Activated T-helper 2 cell treated with anti-CD3 and anti-CD28 coated beads, Interferon-gamma antibody, Interleukin-2, Interleukin-4, amounts not matched to agents 10 μg/mL and 5 μg/mL and 100 μg/mL, durations not matched to agents 14 hours and 24 hours and 36 hours (primary cell): ENCODE measurements at regions of chr16 and their contacts with region 1.

Region 1: DNA sequence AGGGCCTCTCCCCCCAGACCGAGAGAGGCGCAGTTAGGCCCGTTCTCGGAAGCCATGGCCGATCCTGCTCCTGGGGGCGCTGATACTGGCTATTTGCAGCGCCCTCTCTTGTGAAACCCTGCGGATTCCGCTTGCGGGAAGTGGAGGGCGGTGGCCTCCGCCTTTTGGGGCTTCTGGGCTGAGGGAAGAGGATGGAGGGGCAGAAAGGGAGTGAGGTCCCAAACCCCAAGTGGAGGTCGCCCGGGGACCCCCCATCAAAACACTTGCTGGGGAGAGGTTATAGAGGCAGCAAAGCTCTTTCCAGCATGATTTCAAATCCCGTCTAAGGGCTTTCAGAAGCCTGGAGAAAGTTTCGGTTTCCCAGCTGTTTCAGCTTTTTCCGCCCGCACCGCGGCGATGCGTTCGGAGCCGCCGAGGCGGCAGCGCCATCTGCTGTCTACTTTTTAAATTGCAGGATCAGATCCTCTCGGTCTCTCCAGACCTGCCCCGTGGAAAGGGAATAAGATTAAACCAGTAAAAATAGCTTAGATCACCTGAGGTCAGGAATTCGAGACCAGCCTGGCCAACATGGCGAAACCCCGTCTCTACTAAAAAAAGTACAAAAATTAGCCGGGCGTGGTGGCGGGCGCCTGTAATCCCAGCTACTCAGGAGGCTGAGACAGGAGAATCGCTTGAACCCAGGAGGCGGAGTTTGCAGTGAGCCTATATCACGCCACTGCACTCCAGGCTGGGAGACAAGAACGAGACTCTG is 15.8 kb downstream of the SNX20 start:
- DNase-seq: peak; percentile 74
- H3K4me3 Mint-ChIP-seq: peak overlapping the region; percentile 55
- H3K27ac Mint-ChIP-seq: peak overlapping the region; percentile 17
- H3K4me1 Mint-ChIP-seq: peaks cover 34% of the 10 kb centered on the region
- H3K27me3 Mint-ChIP-seq: no peaks in the 10 kb centered on the region

Region 2: GRCh38 chr16:50368410-50369132 is 296.7 kb before region 1 on chr16 and contains the start of gene BRD7:
- intact Hi-C with region 1: loop called (anchors 2 kb)
- DNase-seq: peak; percentile 59
- H3K4me3 Mint-ChIP-seq: peak within 1 kb of the TSS; percentile 99
- H3K27ac Mint-ChIP-seq: peak within 1 kb of the TSS; percentile 94
- H3K4me1 Mint-ChIP-seq: peaks cover 40% of the 10 kb centered on the region
- H3K27me3 Mint-ChIP-seq: no peaks in the 10 kb centered on the region
- total RNA-seq, gene BRD7: 76.0 and 79.5 TPM in 2 replicates

Region 3: DNA sequence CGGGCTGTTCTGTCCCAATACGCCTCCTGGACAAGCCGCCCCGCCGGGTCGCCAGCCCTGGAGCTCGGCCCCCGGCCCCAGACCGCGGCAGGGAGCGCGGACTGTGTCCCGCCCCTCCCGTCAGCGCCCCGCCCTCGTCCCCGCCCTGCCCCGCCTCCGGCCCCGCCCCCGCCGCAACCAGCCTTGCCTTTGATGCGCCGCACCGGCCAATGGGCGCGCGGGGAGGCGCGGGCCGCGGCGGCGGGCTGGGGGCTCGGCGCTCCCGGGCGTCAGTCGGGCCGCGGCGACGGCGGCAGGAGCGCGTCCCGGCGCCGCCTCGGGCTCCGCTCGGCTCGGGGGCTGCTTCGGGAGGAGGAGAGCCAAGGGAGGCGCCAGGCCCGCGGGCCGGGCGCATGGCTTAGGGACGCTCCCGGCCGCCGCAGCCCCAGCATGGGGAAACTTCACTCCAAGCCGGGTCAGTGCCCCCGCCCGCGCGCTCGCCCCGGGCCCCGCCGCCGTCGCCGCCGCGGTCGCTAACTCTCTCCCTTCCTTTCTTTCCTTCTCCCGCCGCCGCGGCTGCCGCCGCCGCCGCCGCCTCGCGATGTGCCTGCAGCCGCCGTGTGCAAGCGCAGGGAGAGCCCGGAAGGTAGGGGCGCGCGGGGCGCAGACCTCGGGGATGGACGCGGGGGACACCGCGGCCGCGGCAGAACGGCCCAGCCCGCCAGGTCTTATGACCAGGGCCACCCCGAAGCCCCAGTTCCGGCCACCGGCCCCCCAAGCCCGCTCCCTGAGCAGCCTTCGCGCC is 117.0 kb before region 1 on chr16 and contains the start of gene NKD1:
- intact Hi-C with region 1: loop called (anchors 5 kb)
- DNase-seq: peak; percentile 59
- H3K4me3 Mint-ChIP-seq: peak within 1 kb of the TSS; percentile 90
- H3K27ac Mint-ChIP-seq: peak within 1 kb of the TSS; percentile 28
- H3K4me1 Mint-ChIP-seq: peaks cover 4% of the 10 kb centered on the region
- H3K27me3 Mint-ChIP-seq: peaks cover 67% of the 10 kb centered on the region
- total RNA-seq, gene NKD1: 0.96 and 1.8 TPM in 2 replicates

Region 4: GRCh38 chr16:50683689-50684374 is 18.5 kb after region 1 on chr16:
- intact Hi-C with region 1: loop called (anchors 2 kb)
- DNase-seq: peak; percentile 61
- H3K4me3 Mint-ChIP-seq: peak overlapping the region; percentile 45
- H3K27ac Mint-ChIP-seq: peak overlapping the region; percentile 86
- H3K4me1 Mint-ChIP-seq: peaks cover 58% of the 10 kb centered on the region
- H3K27me3 Mint-ChIP-seq: no peaks in the 10 kb centered on the region

Region 5: GRCh38 chr16:50697851-50698767 is 32.8 kb after region 1 on chr16:
- intact Hi-C with region 1: loop called (anchors 5 kb)
- DNase-seq: no peak
- H3K4me3 Mint-ChIP-seq: peak overlapping the region; percentile 70
- H3K27ac Mint-ChIP-seq: peak overlapping the region; percentile 88
- H3K4me1 Mint-ChIP-seq: peaks cover 63% of the 10 kb centered on the region
- H3K27me3 Mint-ChIP-seq: no peaks in the 10 kb centered on the region